ENCODE measurements at regions of chr2 and their contacts with region 1.

Region 1: DNA sequence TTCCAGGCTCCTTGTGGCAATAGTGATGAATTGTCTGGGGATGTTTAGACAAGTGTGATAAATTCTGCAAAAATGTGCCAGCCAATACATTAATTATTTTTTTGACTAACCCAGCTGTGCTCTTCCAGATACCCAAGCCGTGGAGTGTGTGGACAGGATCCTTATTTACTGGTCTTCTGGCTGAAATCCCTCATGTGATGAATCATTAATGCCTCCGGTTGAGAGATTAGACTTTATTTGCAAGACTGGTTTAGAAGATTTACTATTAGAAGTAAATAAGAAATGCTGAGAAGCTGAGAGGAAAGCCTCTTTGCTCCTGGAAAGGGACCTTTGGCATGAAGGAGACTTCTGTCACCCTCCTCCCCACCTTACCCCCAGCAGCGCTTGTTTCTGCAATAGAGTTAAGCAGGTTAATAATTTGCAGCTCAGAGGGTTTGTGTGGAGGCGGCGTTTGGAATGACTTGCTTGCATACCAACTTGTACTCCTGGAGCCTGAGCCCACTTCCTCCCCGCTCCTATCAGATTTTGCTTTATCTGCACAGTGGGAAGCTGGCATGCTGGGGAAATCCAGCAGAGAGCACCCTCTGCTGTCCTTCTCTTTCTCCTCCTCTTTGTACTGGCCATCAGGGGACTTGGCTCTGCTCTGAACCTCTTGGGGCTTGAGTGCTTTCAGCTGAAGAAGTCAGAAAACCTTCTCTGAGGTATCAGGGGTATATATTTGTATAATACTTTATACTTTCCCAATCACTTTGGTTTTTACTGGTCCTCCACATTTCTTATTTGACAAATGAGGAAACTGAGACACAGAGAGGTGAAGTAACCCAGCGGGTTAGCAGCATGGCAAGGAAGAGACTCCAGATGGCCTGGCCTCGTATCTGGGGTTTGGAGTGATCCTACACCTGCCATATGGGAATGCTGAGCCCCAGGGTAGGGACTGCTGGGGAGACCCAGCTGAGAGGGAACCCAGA is 16.3 kb downstream of the SLC3A1 start:
- DNase-seq: peak in 1 of 2 donors; percentile 25
- H3K4me3 ChIP-seq: no peak overlapping the region
- CTCF ChIP-seq: no peak
- POLR2A ChIP-seq: no peak

Region 2: DNA sequence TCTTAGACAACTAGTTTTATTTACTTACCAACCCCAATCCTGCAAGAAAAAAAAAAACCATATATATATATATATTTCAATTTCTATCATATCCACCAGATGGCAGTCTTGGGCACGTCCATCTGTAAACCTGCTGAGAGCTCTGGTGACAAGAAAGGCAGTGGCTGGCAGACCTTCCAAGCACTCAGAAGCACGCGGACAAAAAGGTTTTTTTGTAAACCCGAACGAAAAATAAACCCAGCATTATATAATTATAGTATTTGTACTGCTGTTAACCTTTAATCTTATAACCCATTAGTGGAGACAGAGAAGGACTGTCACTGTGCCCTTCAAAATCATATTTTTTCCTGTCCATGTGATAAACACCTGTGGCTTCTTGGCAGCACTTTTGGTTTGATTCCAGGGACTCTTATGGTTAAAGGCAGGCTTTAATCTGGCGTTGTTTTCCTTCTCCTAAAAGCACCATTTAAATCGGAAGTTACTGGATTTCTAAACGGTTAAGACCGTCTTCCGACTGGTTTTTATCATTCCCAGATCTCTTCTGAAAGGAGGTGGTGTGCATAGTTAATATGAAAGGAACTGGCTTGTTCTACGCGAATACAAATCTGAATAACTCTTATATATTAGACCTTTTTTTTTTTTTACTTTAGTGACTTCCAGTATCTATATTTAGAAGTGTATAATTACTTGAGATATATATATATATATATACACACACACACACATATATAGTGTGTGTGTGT is 47.3 kb before region 1 on chr2:
- intact Hi-C with region 1: loop called (anchors 5 kb)
- DNase-seq: peak in 1 of 2 donors; percentile 45
- H3K4me3 ChIP-seq: no peak overlapping the region
- CTCF ChIP-seq: no peak
- POLR2A ChIP-seq: no peak

Region 3: GRCh38 chr2:45524016-45524415 is 1232.5 kb after region 1 on chr2:
- intact Hi-C with region 1: loop called (anchors 10 kb)
- DNase-seq: no peak
- H3K4me3 ChIP-seq: no peak overlapping the region
- CTCF ChIP-seq: no peak
- POLR2A ChIP-seq: no peak

Measured in lower leg skin (tissue), 4 donors.